Activated CD4-positive, alpha-beta T cell treated with anti-CD3 and anti-CD28 coated beads, Interleukin-2, amount 10 ng/mL, durations not matched to agents 24 days and 14 days (primary cell): ENCODE measurements at regions of chr3 and their contacts with region 1.

Region 1: GRCh38 chr3:147361454-147362420 is 44.6 kb downstream of the ZIC4 start:
- DNase-seq: peak; percentile 79
- H3K4me3 Mint-ChIP-seq: no peak overlapping the region
- H3K27ac Mint-ChIP-seq: no peak overlapping the region
- H3K4me1 Mint-ChIP-seq: no peaks in the 10 kb centered on the region
- H3K27me3 Mint-ChIP-seq: peaks cover 46% of the 10 kb centered on the region

Region 2: GRCh38 chr3:147391781-147392624 is 30.3 kb after region 1 on chr3:
- intact Hi-C with region 1: loop called (anchors 1 kb)
- DNase-seq: no peak
- H3K4me3 Mint-ChIP-seq: no peak overlapping the region
- H3K27ac Mint-ChIP-seq: peak overlapping the region; percentile 41
- H3K4me1 Mint-ChIP-seq: peaks cover 1% of the 10 kb centered on the region
- H3K27me3 Mint-ChIP-seq: peaks cover 71% of the 10 kb centered on the region

Region 3: DNA sequence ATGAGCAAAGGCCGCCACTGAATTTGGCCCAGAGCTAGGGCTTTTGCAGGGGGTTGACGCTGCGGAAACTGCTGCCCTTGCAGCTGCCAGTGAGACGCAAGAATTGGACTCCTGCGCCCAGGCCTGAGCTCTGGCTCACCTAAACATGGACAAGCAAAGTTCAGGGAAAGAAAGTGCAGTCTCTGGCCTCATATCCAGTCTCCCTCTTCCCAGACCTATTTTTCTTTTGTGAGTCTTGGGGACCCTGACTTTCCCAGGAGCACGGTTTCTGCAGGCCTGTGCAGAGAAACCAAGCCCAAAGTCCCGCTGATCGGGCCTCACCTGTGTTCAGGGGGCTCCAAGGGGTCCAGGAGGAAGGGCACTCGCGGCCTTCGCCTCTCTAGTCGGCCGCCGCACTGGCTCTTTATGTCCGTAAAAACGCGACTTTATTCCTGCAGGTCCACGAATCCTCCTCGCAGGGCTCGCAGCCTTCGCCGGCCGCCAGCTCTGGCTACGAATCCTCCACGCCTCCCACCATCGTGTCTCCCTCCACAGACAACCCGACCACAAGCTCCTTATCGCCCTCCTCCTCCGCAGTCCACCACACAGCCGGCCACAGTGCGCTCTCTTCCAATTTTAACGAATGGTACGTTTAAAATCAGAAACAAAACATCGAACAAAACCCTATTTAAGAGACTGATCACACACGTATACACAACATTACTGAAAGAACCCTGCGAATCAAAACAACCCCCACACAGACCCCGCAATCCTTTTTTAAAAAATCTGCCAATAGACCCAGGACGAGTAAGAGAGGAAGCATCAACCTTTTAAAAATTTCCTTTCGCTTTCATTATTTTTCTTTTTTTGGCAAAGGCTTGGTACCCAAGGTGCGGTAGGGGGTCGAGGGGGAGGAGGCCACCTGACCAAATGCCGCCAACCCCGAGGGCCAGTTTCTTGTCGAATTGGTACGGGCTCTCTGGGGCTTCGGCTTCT is 51.5 kb after region 1 on chr3:
- intact Hi-C with region 1: loop called (anchors 2 kb)
- DNase-seq: no peak
- H3K4me3 Mint-ChIP-seq: peak overlapping the region; percentile 65
- H3K27ac Mint-ChIP-seq: peak overlapping the region; percentile 79
- H3K4me1 Mint-ChIP-seq: peaks cover 18% of the 10 kb centered on the region
- H3K27me3 Mint-ChIP-seq: peaks cover 67% of the 10 kb centered on the region

Region 4: GRCh38 chr3:147472846-147473245 is 111.1 kb after region 1 on chr3:
- intact Hi-C with region 1: no loop called
- DNase-seq: no peak
- H3K4me3 Mint-ChIP-seq: no peak overlapping the region
- H3K27ac Mint-ChIP-seq: no peak overlapping the region
- H3K4me1 Mint-ChIP-seq: no peaks in the 10 kb centered on the region
- H3K27me3 Mint-ChIP-seq: no peaks in the 10 kb centered on the region